GM13977 (cell line): ENCODE measurements at regions of chr1 and their contacts with region 1.

Region 1: GRCh38 chr1:51192213-51192843 is 43.7 kb upstream of the RNF11 start:
- DNase-seq: peak; percentile 50
- CTCF ChIP-seq: peak; percentile 78

Region 2: GRCh38 chr1:50774759-50775351 is 417.5 kb before region 1 on chr1:
- in situ Hi-C with region 1: loop called (anchors 10 kb)
- DNase-seq: peak; percentile 27
- CTCF ChIP-seq: peak; percentile 67

Region 3: DNA sequence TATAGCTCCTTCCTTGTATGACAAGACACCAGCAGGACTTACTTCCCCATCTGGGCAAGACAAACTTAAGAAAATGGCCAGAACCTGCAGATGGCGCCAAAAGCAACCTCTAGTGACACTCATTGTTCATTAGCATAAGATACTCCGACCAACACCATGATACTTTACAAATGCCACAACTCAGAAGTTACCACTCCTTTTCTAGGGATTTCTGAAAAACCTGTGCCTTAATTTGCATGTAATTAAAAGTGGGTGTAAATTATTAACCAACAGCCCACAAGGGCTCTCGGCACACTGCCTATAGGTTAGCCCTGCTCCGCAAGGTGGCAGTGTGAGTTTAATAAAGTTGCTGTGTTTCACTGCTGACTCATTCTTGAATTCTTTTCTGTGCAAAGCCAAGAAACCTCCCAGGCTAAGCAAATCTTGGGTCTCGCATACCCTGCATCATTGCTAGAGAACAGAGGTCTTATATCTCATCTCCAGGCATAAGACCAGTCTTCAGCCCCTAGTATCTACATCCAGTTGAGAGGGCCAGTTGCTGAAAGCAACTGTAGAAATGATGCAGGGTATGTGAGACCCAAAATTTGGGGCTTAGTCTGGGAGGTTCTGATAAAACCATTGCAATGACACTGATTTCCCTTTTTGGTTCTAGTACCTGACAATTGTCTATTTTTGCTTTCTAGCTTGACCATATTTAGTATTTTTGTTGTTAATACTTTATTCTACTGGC is 318.7 kb before region 1 on chr1:
- in situ Hi-C with region 1: loop called (anchors 25 kb)
- DNase-seq: peak; percentile 51
- CTCF ChIP-seq: peak; percentile 69

Region 4: GRCh38 chr1:51088488-51088887 is 103.8 kb before region 1 on chr1:
- in situ Hi-C with region 1: loop called (anchors 10 kb)
- DNase-seq: peak; percentile 28
- CTCF ChIP-seq: peak; percentile 44

Region 5: DNA sequence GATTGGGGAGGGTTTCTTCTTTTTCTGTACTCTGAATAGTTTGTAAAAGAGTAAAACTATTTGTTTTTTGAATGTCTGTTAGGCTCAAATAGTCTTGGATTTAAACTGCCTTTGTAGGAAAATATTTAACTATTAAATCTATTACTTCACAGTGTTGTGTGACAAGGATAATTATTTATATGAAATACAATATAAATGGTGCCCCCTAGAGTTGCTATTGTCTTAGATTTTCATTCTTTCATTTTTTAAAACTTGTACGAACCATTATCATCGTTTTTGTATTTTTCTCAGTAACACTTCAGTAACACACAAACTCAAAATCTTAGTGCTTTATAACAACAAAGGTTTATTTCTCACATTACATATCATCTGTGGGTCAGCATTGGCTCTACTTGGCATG is 52.9 kb before region 1 on chr1:
- in situ Hi-C with region 1: no loop called
- DNase-seq: no peak
- CTCF ChIP-seq: no peak

Region 6: GRCh38 chr1:52436817-52437216 is 1244.5 kb after region 1 on chr1:
- in situ Hi-C with region 1: no loop called
- DNase-seq: no peak
- CTCF ChIP-seq: no peak